ENCODE measurements at regions of chr14 and their contacts with region 1.

Region 1: GRCh38 chr14:103518422-103519042 is 4.1 kb downstream of the CKB start:
- DNase-seq: peak; percentile 92
- H3K4me3 ChIP-seq: no peak overlapping the region
- H3K27ac ChIP-seq: peak overlapping the region; percentile 86 to 98 (median 93)
- H3K4me1 ChIP-seq: peaks cover 0 to 53% (median 45%) of the 10 kb centered on the region in 4 donors
- H3K27me3 ChIP-seq: no peaks in the 10 kb centered on the region
- CTCF ChIP-seq: peak; percentile 90 to 98 (median 96)
- EP300 ChIP-seq: no peak
- POLR2A ChIP-seq: no peak

Region 2: GRCh38 chr14:103546652-103547454 is 28.3 kb after region 1 on chr14:
- intact Hi-C with region 1: loop called (anchors 1 kb)
- DNase-seq: peak; percentile 88
- H3K4me3 ChIP-seq: no peak overlapping the region
- H3K27ac ChIP-seq: peak overlapping the region; percentile 55 to 98 (median 93)
- H3K4me1 ChIP-seq: peaks cover 0 to 93% (median 91%) of the 10 kb centered on the region in 4 donors
- H3K27me3 ChIP-seq: no peaks in the 10 kb centered on the region
- CTCF ChIP-seq: peak; percentile 95 to 97 (median 97)
- EP300 ChIP-seq: no peak
- POLR2A ChIP-seq: no peak

Measured in sigmoid colon (tissue), 7 donors.